A549 (cell line): ENCODE measurements at regions of chr6 and their contacts with region 1.

Region 1: GRCh38 chr6:17803409-17803808 is 96.7 kb upstream of the NUP153 start:
- DNase-seq: no peak
- ATAC-seq: no peak
- H3K4me3 ChIP-seq: no peak overlapping the region
- H3K27ac ChIP-seq: no peak overlapping the region
- H3K4me1 ChIP-seq: peaks cover 4% of the 10 kb centered on the region; the same call in 1 of the 3 replicates
- CTCF ChIP-seq: no peak
- EP300 ChIP-seq: no peak
- POLR2A ChIP-seq: no peak
- RAD21 ChIP-seq: no peak

Region 2: DNA sequence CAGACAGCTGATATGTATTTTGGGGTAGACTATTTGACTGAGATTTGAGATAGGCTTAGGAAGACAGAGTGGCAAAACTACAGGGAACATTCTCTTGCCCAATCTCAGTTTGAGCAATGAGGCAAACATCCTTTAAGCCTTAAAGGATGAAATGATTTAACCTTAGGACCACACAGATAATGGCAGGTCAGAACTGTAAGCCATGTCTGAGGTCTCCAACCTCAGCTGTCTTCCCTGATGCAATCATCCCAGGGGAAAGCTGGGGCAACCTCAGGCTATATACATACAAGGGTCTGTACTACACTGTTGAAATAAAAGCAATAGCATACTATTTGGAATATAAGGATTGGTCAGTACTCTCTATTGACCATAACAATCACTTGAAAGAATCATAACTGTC is 12.9 kb before region 1 on chr6:
- CTCF ChIA-PET with region 1: interaction called, 17 read pairs
- POLR2A ChIA-PET with region 1: no interaction called
- DNase-seq: no peak
- ATAC-seq: no peak
- H3K4me3 ChIP-seq: no peak overlapping the region
- H3K27ac ChIP-seq: no peak overlapping the region
- H3K4me1 ChIP-seq: no peaks in the 10 kb centered on the region
- CTCF ChIP-seq: no peak
- EP300 ChIP-seq: no peak
- POLR2A ChIP-seq: no peak
- RAD21 ChIP-seq: no peak

Region 3: GRCh38 chr6:17816921-17817611 is 13.7 kb after region 1 on chr6:
- CTCF ChIA-PET with region 1: interaction called, 27 read pairs
- POLR2A ChIA-PET with region 1: no interaction called
- DNase-seq: peak; percentile 18 to 51
- ATAC-seq: peak; percentile 80 to 85
- H3K4me3 ChIP-seq: no peak overlapping the region
- H3K27ac ChIP-seq: peak overlapping the region; percentile 84 to 93
- H3K4me1 ChIP-seq: peaks cover 39% of the 10 kb centered on the region
- CTCF ChIP-seq: no peak
- EP300 ChIP-seq: no peak
- POLR2A ChIP-seq: no peak
- RAD21 ChIP-seq: no peak; a peak in 1 of 5 replicates

Region 4: DNA sequence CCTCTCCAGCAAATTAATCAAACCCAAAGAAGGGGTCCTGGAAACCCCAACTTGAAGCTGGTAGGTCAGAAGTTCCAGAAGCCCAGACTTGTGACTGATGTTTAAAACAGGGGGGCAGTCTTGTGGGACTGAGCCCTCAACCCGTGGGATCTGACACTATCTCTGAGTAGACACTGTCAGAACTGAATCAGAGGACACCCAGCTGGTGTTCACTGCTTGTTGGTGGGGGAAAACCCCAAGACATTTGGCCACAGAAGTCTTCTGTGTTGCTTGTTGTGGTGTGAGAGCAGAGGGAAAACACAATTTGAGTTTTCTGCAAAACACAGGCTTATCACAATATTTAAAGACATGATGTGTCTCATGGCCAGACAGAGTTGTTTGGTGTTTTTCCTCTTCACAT is 154.1 kb after region 1 on chr6:
- CTCF ChIA-PET with region 1: no interaction called
- POLR2A ChIA-PET with region 1: no interaction called
- DNase-seq: no peak
- ATAC-seq: no peak
- H3K4me3 ChIP-seq: no peak overlapping the region
- H3K27ac ChIP-seq: no peak overlapping the region
- H3K4me1 ChIP-seq: peaks cover 12% of the 10 kb centered on the region; the same call in 1 of the 3 replicates
- CTCF ChIP-seq: no peak
- EP300 ChIP-seq: no peak
- POLR2A ChIP-seq: no peak
- RAD21 ChIP-seq: no peak